Caco-2 (cell line): ENCODE measurements at regions of chr3 and their contacts with region 1.

Region 1: GRCh38 chr3:163048881-163049280 is 1552.3 kb downstream of the OTOL1 start:
- DNase-seq: no peak
- H3K4me3 ChIP-seq: no peak overlapping the region
- H3K4me3 Mint-ChIP-seq: no peak overlapping the region
- H3K27ac Mint-ChIP-seq: no peak overlapping the region
- H3K4me1 ChIP-seq: no peaks in the 10 kb centered on the region
- H3K4me1 Mint-ChIP-seq: no peaks in the 10 kb centered on the region
- H3K27me3 ChIP-seq: no peaks in the 10 kb centered on the region
- H3K27me3 Mint-ChIP-seq: no peaks in the 10 kb centered on the region
- CTCF ChIP-seq: no peak

Region 2: DNA sequence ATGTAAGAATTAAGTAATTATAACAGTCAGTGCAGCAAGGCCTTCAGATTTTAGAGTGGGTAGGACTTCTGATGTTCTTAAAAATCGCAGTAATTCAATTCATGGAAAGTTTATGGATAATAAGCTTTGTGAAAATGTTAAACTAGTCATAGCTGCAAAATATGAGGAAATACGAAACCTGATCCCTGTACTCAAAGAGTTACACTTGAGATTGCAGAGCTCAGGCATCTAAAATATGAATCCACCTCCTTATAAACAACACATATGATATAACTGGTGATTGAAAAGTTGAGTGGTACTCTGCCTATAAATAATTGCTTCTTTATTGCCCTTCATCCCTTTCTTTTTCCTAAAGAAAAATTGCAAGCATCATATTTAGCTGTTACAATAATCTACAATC is 1079.0 kb before region 1 on chr3:
- CTCF ChIA-PET with region 1: no interaction called
- POLR2A ChIA-PET with region 1: no interaction called
- intact Hi-C with region 1: loop called (anchors 5 kb)
- DNase-seq: no peak
- H3K4me3 ChIP-seq: no peak overlapping the region
- H3K4me3 Mint-ChIP-seq: no peak overlapping the region
- H3K27ac Mint-ChIP-seq: no peak overlapping the region
- H3K4me1 ChIP-seq: no peaks in the 10 kb centered on the region
- H3K4me1 Mint-ChIP-seq: no peaks in the 10 kb centered on the region
- H3K27me3 ChIP-seq: no peaks in the 10 kb centered on the region
- H3K27me3 Mint-ChIP-seq: no peaks in the 10 kb centered on the region
- CTCF ChIP-seq: no peak

Region 3: GRCh38 chr3:163167352-163167751 is 118.5 kb after region 1 on chr3:
- CTCF ChIA-PET with region 1: no interaction called
- POLR2A ChIA-PET with region 1: no interaction called
- intact Hi-C with region 1: no loop called
- DNase-seq: no peak
- H3K4me3 ChIP-seq: no peak overlapping the region
- H3K4me3 Mint-ChIP-seq: no peak overlapping the region
- H3K27ac Mint-ChIP-seq: no peak overlapping the region
- H3K4me1 ChIP-seq: no peaks in the 10 kb centered on the region
- H3K4me1 Mint-ChIP-seq: no peaks in the 10 kb centered on the region
- H3K27me3 ChIP-seq: no peaks in the 10 kb centered on the region
- H3K27me3 Mint-ChIP-seq: no peaks in the 10 kb centered on the region
- CTCF ChIP-seq: no peak